B cell (primary cell): ENCODE measurements at regions of chr21 and their contacts with region 1.

Region 1: DNA sequence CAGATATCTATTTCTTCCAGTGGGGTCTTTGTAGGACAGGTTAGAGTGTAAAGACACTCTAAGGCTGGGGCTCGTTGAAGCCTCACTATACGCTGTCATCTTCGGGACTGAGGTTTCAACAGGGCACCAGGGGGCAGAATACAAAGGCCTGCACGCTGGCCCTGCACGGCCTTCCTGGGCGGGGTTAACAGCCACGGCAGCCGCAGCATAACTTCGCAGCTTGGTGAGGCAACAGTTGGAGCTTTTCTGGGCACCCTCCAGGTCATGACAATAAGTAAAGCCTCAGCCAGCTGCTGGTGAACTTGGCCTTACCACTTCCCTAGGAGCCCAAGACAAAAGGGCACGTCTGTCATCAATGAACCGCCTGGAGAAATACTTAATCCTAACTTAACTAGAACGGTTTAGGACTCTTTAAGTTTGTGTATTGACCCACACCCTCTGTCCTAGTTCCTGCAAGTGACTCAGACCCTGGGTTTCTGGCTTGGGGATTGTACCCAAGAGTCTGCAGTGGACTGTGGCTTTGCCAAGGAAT is 2.3 kb upstream of the RUNX1 start:
- DNase-seq: peak; percentile 83
- ATAC-seq: peak; percentile 37
- H3K4me3 ChIP-seq: peak overlapping the region in 1 of 5 experiments; percentile 27
- H3K4me3 Mint-ChIP-seq: peak overlapping the region; percentile 82
- H3K27ac ChIP-seq: peak overlapping the region; percentile 51 to 69
- H3K27ac Mint-ChIP-seq: peak overlapping the region; percentile 96
- H3K4me1 ChIP-seq: peaks cover 33 to 39% of the 10 kb centered on the region in 2 donors
- H3K4me1 Mint-ChIP-seq: peaks cover 56% of the 10 kb centered on the region
- H3K27me3 ChIP-seq: no peaks in the 10 kb centered on the region
- H3K27me3 Mint-ChIP-seq: no peaks in the 10 kb centered on the region
- CTCF ChIP-seq: peak; percentile 62

Region 2: GRCh38 chr21:34801519-34802132 is 249.7 kb before region 1 on chr21:
- CTCF ChIA-PET with region 1: interaction called, 4 read pairs
- POLR2A ChIA-PET with region 1: no interaction called
- intact Hi-C with region 1: loop called (anchors 5 kb)
- DNase-seq: peak; percentile 55
- ATAC-seq: peak; percentile 70
- H3K4me3 ChIP-seq: no peak overlapping the region
- H3K4me3 Mint-ChIP-seq: no peak overlapping the region
- H3K27ac ChIP-seq: peak overlapping the region in 1 of 2 donors; percentile 25
- H3K27ac Mint-ChIP-seq: no peak overlapping the region
- H3K4me1 ChIP-seq: no peaks in the 10 kb centered on the region
- H3K4me1 Mint-ChIP-seq: peaks cover 20% of the 10 kb centered on the region
- H3K27me3 ChIP-seq: no peaks in the 10 kb centered on the region
- H3K27me3 Mint-ChIP-seq: no peaks in the 10 kb centered on the region
- CTCF ChIP-seq: peak; percentile 68

Region 3: DNA sequence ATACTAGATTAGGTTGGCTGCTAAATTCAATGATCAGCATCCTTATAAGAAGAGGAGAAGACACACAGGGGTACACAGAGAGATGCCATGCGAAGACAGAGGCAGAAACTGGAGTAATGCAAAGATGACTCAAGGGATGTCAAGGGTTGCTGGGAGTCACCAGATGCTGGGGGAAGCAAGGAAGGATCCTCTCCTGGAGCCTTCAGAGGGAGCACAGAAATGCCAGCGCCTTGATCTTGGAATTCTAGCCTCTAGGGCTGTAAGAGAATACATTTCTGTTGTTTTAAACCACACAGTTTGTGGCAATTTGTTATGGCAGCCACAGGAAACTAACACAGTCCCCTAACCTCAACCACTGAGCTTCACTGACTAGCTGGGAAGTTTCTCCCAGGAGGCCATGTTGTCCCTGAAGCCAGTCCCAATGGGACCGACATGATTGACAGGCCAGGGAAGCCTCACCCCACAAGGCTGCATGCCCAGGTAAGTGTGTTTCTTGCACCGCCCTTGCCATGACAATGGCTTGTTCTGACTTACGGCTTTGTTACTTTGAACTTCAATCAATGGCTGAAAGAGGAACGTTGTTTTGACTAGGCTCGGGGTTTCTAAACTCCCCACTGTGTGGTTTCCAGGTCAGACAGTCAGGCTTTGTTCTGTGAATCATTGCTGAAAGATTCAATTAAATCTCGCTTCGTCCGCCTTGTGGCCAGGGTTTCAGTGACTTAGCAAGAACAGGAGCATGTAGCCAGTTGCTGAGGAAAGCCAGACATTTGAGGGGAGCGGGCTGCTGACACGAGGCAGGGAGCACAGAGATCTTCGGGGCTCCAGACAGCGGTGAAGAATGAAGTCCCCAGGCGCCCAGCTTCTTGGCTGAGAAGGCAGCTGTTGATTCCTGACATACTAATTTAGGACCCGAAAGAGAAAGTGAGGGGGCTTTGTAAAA is 64.5 kb before region 1 on chr21:
- CTCF ChIA-PET with region 1: interaction called, 5 read pairs
- POLR2A ChIA-PET with region 1: interaction called, 3 read pairs
- intact Hi-C with region 1: loop called (anchors 2 kb)
- DNase-seq: peak; percentile 45
- ATAC-seq: peak; percentile 56
- H3K4me3 ChIP-seq: peak overlapping the region in 2 of 5 experiments; percentile 16 to 31
- H3K4me3 Mint-ChIP-seq: peak overlapping the region; percentile 65
- H3K27ac ChIP-seq: peak overlapping the region in 1 of 2 donors; percentile 65
- H3K27ac Mint-ChIP-seq: peak overlapping the region; percentile 77
- H3K4me1 ChIP-seq: peaks cover 49 to 50% of the 10 kb centered on the region in 2 donors
- H3K4me1 Mint-ChIP-seq: peaks cover 75% of the 10 kb centered on the region
- H3K27me3 ChIP-seq: no peaks in the 10 kb centered on the region
- H3K27me3 Mint-ChIP-seq: no peaks in the 10 kb centered on the region
- CTCF ChIP-seq: no peak

Region 4: DNA sequence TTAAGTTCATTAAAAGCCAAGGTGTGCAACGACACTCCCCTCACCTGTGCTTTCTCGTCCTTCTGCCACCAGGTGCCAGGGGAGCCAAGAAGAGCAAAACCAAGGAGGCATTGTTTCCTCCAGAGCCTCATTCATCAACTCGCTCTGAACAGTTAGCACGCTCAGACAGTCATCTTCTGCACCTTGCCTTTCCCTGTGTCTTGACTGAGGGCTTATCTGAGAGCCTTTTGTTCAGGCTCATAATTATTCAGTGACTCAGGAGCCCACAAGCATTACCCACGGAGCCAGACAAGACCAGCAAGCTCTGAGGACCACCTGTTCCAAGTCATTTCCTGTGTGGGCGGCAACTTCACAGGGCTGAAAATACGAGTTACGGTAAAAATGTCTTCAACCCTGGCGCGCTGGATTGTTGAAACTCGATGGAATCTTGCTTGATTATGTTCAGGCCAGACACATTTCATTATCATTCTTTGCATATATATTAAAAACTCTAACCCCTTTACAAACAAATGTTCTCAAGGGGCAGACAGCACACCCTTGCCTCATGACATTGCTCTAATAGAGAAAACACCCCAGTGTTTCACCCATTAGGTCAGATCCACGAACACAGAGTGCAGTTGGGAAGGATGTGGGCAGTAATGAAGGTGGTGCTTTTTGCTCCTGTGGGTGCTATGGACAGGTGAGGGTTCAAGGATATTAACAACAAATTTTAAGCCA is 87.5 kb after region 1 on chr21:
- CTCF ChIA-PET with region 1: no interaction called
- POLR2A ChIA-PET with region 1: no interaction called
- intact Hi-C with region 1: loop called (anchors 5 kb)
- DNase-seq: peak; percentile 37
- ATAC-seq: peak; percentile 64
- H3K4me3 ChIP-seq: peak overlapping the region in 2 of 5 experiments; percentile 8 to 18
- H3K4me3 Mint-ChIP-seq: peak overlapping the region; percentile 54
- H3K27ac ChIP-seq: no peak overlapping the region
- H3K27ac Mint-ChIP-seq: no peak overlapping the region
- H3K4me1 ChIP-seq: peaks cover 13 to 14% of the 10 kb centered on the region in 2 donors
- H3K4me1 Mint-ChIP-seq: peaks cover 12% of the 10 kb centered on the region
- H3K27me3 ChIP-seq: no peaks in the 10 kb centered on the region
- H3K27me3 Mint-ChIP-seq: no peaks in the 10 kb centered on the region
- CTCF ChIP-seq: no peak

Region 5: GRCh38 chr21:35226948-35227744 is 175.8 kb after region 1 on chr21:
- CTCF ChIA-PET with region 1: interaction called, 8 read pairs
- POLR2A ChIA-PET with region 1: interaction called, 5 read pairs
- intact Hi-C with region 1: loop called (anchors 1 kb)
- DNase-seq: peak; percentile 80
- ATAC-seq: peak; percentile 84
- H3K4me3 ChIP-seq: peak overlapping the region in 1 of 5 experiments; percentile 4
- H3K4me3 Mint-ChIP-seq: peak overlapping the region; percentile 72
- H3K27ac ChIP-seq: peak overlapping the region; percentile 5 to 68
- H3K27ac Mint-ChIP-seq: peak overlapping the region; percentile 78
- H3K4me1 ChIP-seq: peaks cover 26% of the 10 kb centered on the region in 2 donors
- H3K4me1 Mint-ChIP-seq: peaks cover 29% of the 10 kb centered on the region
- H3K27me3 ChIP-seq: no peaks in the 10 kb centered on the region
- H3K27me3 Mint-ChIP-seq: peaks cover 12% of the 10 kb centered on the region
- CTCF ChIP-seq: no peak